ENCODE measurements at regions of chr1 and their contacts with region 1.

Region 1: DNA sequence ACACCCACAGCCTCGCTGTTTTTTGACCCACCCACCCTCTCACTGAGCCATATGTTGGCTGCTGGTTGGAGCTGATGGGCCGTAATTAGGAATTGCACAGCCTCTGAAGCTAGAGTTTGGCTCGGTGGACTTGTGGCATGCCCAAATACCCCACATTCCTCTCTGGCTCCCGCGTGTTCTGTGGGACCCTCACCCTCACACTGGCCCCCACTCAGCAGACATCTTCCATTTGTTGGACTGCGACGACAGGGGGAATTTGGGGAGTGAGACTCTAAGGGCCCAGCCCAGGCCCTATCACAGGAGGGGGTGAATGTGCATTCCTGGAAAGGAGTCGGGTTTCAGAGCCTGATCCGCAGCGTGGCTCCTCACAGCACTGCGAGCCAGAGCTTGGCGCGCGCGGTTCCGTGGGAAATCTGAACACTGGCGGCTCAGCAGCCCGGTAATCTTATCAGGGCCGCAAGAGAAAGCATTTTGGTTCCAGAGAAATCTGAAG is 5.2 kb downstream of the RCSD1 start:
- DNase-seq: no peak
- H3K4me3 ChIP-seq: no peak overlapping the region
- H3K4me3 Mint-ChIP-seq: peak overlapping the region in 4 of 8 donors; percentile 16 to 30 (median 23)
- H3K27ac ChIP-seq: no peak overlapping the region
- H3K27ac Mint-ChIP-seq: peak overlapping the region in 4 of 7 donors; percentile 57 to 97 (median 97)
- H3K4me1 ChIP-seq: peaks cover 90% of the 10 kb centered on the region
- H3K4me1 Mint-ChIP-seq: peaks cover 59 to 98% (median 73%) of the 10 kb centered on the region in 4 donors
- H3K27me3 ChIP-seq: no peaks in the 10 kb centered on the region
- H3K27me3 Mint-ChIP-seq: no peaks in the 10 kb centered on the region

Region 2: GRCh38 chr1:167594822-167595221 is 40.4 kb before region 1 on chr1:
- CTCF ChIA-PET with region 1: interaction called, 406 read pairs
- POLR2A ChIA-PET with region 1: interaction called, 255 read pairs
- intact Hi-C with region 1: loop called (anchors 1 kb)
- DNase-seq: no peak
- H3K4me3 ChIP-seq: no peak overlapping the region
- H3K4me3 Mint-ChIP-seq: no peak overlapping the region
- H3K27ac ChIP-seq: no peak overlapping the region
- H3K27ac Mint-ChIP-seq: no peak overlapping the region
- H3K4me1 ChIP-seq: peaks cover 2% of the 10 kb centered on the region
- H3K4me1 Mint-ChIP-seq: peaks cover 2 to 3% (median 2%) of the 10 kb centered on the region in 4 donors
- H3K27me3 ChIP-seq: no peaks in the 10 kb centered on the region
- H3K27me3 Mint-ChIP-seq: no peaks in the 10 kb centered on the region

Region 3: GRCh38 chr1:167617153-167618147 is 17.8 kb before region 1 on chr1:
- CTCF ChIA-PET with region 1: interaction called, 54 read pairs
- POLR2A ChIA-PET with region 1: interaction called, 178 read pairs
- intact Hi-C with region 1: no loop called
- DNase-seq: no peak
- H3K4me3 ChIP-seq: peak overlapping the region in 1 of 2 donors; percentile 29
- H3K4me3 Mint-ChIP-seq: peak overlapping the region; percentile 55 to 90 (median 80)
- H3K27ac ChIP-seq: peak overlapping the region; percentile 35
- H3K27ac Mint-ChIP-seq: peak overlapping the region; percentile 77 to 93 (median 88)
- H3K4me1 ChIP-seq: peaks cover 60% of the 10 kb centered on the region
- H3K4me1 Mint-ChIP-seq: peaks cover 44 to 75% (median 59%) of the 10 kb centered on the region in 4 donors
- H3K27me3 ChIP-seq: no peaks in the 10 kb centered on the region
- H3K27me3 Mint-ChIP-seq: no peaks in the 10 kb centered on the region

Region 4: GRCh38 chr1:167650269-167651160 is 15.3 kb after region 1 on chr1:
- CTCF ChIA-PET with region 1: interaction called, 30 read pairs
- POLR2A ChIA-PET with region 1: interaction called, 73 read pairs
- intact Hi-C with region 1: no loop called
- DNase-seq: no peak
- H3K4me3 ChIP-seq: peak overlapping the region in 1 of 2 donors; percentile 12
- H3K4me3 Mint-ChIP-seq: peak overlapping the region in 7 of 8 donors; percentile 63 to 87 (median 75)
- H3K27ac ChIP-seq: peak overlapping the region; percentile 55
- H3K27ac Mint-ChIP-seq: peak overlapping the region; percentile 87 to 95 (median 92)
- H3K4me1 ChIP-seq: peaks cover 98% of the 10 kb centered on the region
- H3K4me1 Mint-ChIP-seq: peaks cover 71 to 92% (median 84%) of the 10 kb centered on the region in 4 donors
- H3K27me3 ChIP-seq: no peaks in the 10 kb centered on the region
- H3K27me3 Mint-ChIP-seq: no peaks in the 10 kb centered on the region

Region 5: DNA sequence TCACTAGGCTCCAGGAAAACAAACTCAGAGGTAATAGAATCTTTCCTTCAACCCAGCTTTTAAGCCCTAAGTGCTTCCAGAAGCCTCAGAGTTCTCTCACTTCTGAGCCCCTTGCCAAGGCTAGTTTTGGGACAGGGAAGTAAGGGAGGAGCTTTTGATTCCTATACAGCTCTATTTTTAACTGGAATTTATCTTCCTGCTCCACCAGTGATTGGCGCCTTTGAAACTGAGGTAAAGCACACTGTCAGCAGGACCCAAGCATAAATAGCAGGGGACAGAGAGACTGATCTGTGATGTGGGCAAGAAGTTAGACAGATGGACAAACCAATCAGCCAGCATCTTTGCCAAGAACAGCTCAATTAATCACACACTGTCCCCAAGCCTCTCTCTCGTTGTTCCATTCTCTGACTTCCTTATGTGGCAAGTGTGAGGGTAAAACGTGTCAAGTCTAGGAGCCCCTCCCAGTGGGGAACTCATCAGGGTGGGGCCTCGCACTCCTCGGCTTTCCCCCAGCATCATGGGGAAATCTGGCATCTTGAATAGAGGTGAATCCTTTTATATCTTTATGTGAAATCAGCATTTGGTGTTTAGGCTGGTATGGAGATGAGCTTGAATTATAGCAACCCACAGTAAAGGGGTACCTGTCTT is 46.4 kb after region 1 on chr1:
- CTCF ChIA-PET with region 1: interaction called, 97 read pairs
- POLR2A ChIA-PET with region 1: no interaction called
- intact Hi-C with region 1: no loop called
- DNase-seq: no peak
- H3K4me3 ChIP-seq: no peak overlapping the region
- H3K4me3 Mint-ChIP-seq: peak overlapping the region in 1 of 8 donors; percentile 32
- H3K27ac ChIP-seq: peak overlapping the region; percentile 24
- H3K27ac Mint-ChIP-seq: peak overlapping the region in 6 of 7 donors; percentile 57 to 90 (median 84)
- H3K4me1 ChIP-seq: peaks cover 27% of the 10 kb centered on the region
- H3K4me1 Mint-ChIP-seq: peaks cover 1 to 28% (median 15%) of the 10 kb centered on the region in 4 donors
- H3K27me3 ChIP-seq: no peaks in the 10 kb centered on the region
- H3K27me3 Mint-ChIP-seq: no peaks in the 10 kb centered on the region

Region 6: GRCh38 chr1:167860231-167860923 is 225.2 kb after region 1 on chr1:
- CTCF ChIA-PET with region 1: no interaction called
- POLR2A ChIA-PET with region 1: no interaction called
- intact Hi-C with region 1: no loop called
- DNase-seq: no peak
- H3K4me3 ChIP-seq: no peak overlapping the region
- H3K4me3 Mint-ChIP-seq: no peak overlapping the region
- H3K27ac ChIP-seq: no peak overlapping the region
- H3K27ac Mint-ChIP-seq: no peak overlapping the region
- H3K4me1 ChIP-seq: no peaks in the 10 kb centered on the region
- H3K4me1 Mint-ChIP-seq: no peaks in the 10 kb centered on the region
- H3K27me3 ChIP-seq: no peaks in the 10 kb centered on the region
- H3K27me3 Mint-ChIP-seq: no peaks in the 10 kb centered on the region

Measured in CD4-positive, alpha-beta memory T cell (primary cell).